ENCODE measurements at regions of chr1 and their contacts with region 1.

Region 1: GRCh38 chr1:239898062-239898730 is 193.5 kb upstream of the FMN2 start:
- DNase-seq: peak; percentile 41 to 76 (median 71)
- ATAC-seq: peak; percentile 96
- H3K4me3 ChIP-seq: no peak overlapping the region
- H3K4me3 Mint-ChIP-seq: peak overlapping the region in 5 of 10 donors; percentile 7 to 58 (median 36)
- H3K27ac ChIP-seq: no peak overlapping the region
- H3K27ac Mint-ChIP-seq: peak overlapping the region in 1 of 9 donors; percentile 10
- H3K4me1 ChIP-seq: no peaks in the 10 kb centered on the region
- H3K4me1 Mint-ChIP-seq: peaks cover 0 to 7% (median 2%) of the 10 kb centered on the region in 7 donors
- H3K27me3 ChIP-seq: no peaks in the 10 kb centered on the region
- H3K27me3 Mint-ChIP-seq: peaks cover 0 to 10% (median 4%) of the 10 kb centered on the region in 5 donors

Region 2: GRCh38 chr1:238239343-238239742 is 1658.9 kb before region 1 on chr1:
- CTCF ChIA-PET with region 1: no interaction called
- POLR2A ChIA-PET with region 1: no interaction called
- intact Hi-C with region 1: loop called in 1 of 2 experiments (anchors 5 kb)
- DNase-seq: no peak
- ATAC-seq: no peak
- H3K4me3 ChIP-seq: no peak overlapping the region
- H3K4me3 Mint-ChIP-seq: no peak overlapping the region
- H3K27ac ChIP-seq: no peak overlapping the region
- H3K27ac Mint-ChIP-seq: no peak overlapping the region
- H3K4me1 ChIP-seq: no peaks in the 10 kb centered on the region
- H3K4me1 Mint-ChIP-seq: no peaks in the 10 kb centered on the region
- H3K27me3 ChIP-seq: no peaks in the 10 kb centered on the region
- H3K27me3 Mint-ChIP-seq: no peaks in the 10 kb centered on the region

Region 3: GRCh38 chr1:239308701-239309333 is 589.4 kb before region 1 on chr1:
- CTCF ChIA-PET with region 1: interaction called, 4 read pairs
- POLR2A ChIA-PET with region 1: no interaction called
- intact Hi-C with region 1: loop called (anchors 1 kb)
- DNase-seq: peak in 5 of 9 donors; percentile 3 to 19 (median 7)
- ATAC-seq: peak; percentile 51
- H3K4me3 ChIP-seq: no peak overlapping the region
- H3K4me3 Mint-ChIP-seq: no peak overlapping the region
- H3K27ac ChIP-seq: no peak overlapping the region
- H3K27ac Mint-ChIP-seq: no peak overlapping the region
- H3K4me1 ChIP-seq: no peaks in the 10 kb centered on the region
- H3K4me1 Mint-ChIP-seq: no peaks in the 10 kb centered on the region
- H3K27me3 ChIP-seq: no peaks in the 10 kb centered on the region
- H3K27me3 Mint-ChIP-seq: peaks cover 0 to 7% (median 0%) of the 10 kb centered on the region in 5 donors

Region 4: GRCh38 chr1:239538239-239538988 is 359.8 kb before region 1 on chr1:
- CTCF ChIA-PET with region 1: no interaction called
- POLR2A ChIA-PET with region 1: no interaction called
- intact Hi-C with region 1: no loop called
- DNase-seq: no peak
- ATAC-seq: no peak
- H3K4me3 ChIP-seq: no peak overlapping the region
- H3K4me3 Mint-ChIP-seq: no peak overlapping the region
- H3K27ac ChIP-seq: no peak overlapping the region
- H3K27ac Mint-ChIP-seq: no peak overlapping the region
- H3K4me1 ChIP-seq: no peaks in the 10 kb centered on the region
- H3K4me1 Mint-ChIP-seq: no peaks in the 10 kb centered on the region
- H3K27me3 ChIP-seq: no peaks in the 10 kb centered on the region
- H3K27me3 Mint-ChIP-seq: no peaks in the 10 kb centered on the region

Region 5: DNA sequence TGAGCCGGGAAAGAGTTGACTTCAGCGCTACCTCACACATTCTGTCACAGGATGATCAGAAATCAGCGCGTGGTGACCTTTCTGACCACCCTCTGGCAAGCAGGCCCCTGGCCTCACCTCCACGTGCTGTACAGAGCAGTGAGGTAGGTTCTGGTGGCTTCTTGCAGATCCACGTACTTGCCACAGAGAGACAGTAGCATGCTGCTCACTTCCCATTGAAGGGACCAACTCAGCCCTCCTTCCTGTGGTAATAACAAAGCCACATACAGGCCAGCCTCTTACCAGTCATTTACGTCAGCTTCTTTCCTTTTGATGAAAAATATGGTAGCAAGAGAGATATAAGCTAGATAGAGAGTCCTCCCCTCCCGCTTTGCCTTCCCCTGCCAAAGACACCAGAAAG is 311.1 kb before region 1 on chr1:
- CTCF ChIA-PET with region 1: interaction called, 5 read pairs
- POLR2A ChIA-PET with region 1: no interaction called
- intact Hi-C with region 1: loop called (anchors 1 kb)
- DNase-seq: peak in 7 of 9 donors; percentile 37 to 65 (median 54)
- ATAC-seq: peak; percentile 95
- H3K4me3 ChIP-seq: no peak overlapping the region
- H3K4me3 Mint-ChIP-seq: peak overlapping the region in 3 of 10 donors; percentile 14 to 26 (median 23)
- H3K27ac ChIP-seq: no peak overlapping the region
- H3K27ac Mint-ChIP-seq: peak overlapping the region in 6 of 9 donors; percentile 3 to 60 (median 40)
- H3K4me1 ChIP-seq: peaks cover 0 to 5% of the 10 kb centered on the region in 2 donors
- H3K4me1 Mint-ChIP-seq: peaks cover 5 to 17% (median 11%) of the 10 kb centered on the region in 7 donors
- H3K27me3 ChIP-seq: no peaks in the 10 kb centered on the region
- H3K27me3 Mint-ChIP-seq: peaks cover 0 to 9% (median 0%) of the 10 kb centered on the region in 5 donors

Region 6: DNA sequence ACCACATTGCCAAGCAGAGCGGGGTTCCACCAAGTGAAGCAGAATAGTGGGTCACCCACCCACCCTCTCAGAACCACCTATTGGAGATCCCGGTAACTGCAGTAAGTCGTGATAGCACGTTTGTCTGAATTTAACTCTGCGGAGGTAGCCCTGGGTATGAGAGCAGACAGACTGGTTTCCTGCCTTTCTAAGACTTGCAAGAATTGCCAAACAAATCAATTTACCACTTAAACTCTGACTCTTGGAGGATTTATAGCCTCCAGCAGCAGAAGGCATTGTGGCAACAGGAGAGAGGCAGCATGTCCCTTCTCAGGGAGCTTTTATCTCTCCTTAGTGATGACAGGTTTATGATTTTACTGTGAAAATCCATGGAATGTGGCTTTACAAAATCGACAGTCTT is 94.4 kb before region 1 on chr1:
- CTCF ChIA-PET with region 1: no interaction called
- POLR2A ChIA-PET with region 1: no interaction called
- intact Hi-C with region 1: loop called in 1 of 2 experiments (anchors 2 kb)
- DNase-seq: no peak
- ATAC-seq: no peak
- H3K4me3 ChIP-seq: no peak overlapping the region
- H3K4me3 Mint-ChIP-seq: no peak overlapping the region
- H3K27ac ChIP-seq: no peak overlapping the region
- H3K27ac Mint-ChIP-seq: peak overlapping the region in 1 of 9 donors; percentile 4
- H3K4me1 ChIP-seq: no peaks in the 10 kb centered on the region
- H3K4me1 Mint-ChIP-seq: peaks cover 2 to 21% (median 11%) of the 10 kb centered on the region in 7 donors
- H3K27me3 ChIP-seq: no peaks in the 10 kb centered on the region
- H3K27me3 Mint-ChIP-seq: no peaks in the 10 kb centered on the region

Region 7: DNA sequence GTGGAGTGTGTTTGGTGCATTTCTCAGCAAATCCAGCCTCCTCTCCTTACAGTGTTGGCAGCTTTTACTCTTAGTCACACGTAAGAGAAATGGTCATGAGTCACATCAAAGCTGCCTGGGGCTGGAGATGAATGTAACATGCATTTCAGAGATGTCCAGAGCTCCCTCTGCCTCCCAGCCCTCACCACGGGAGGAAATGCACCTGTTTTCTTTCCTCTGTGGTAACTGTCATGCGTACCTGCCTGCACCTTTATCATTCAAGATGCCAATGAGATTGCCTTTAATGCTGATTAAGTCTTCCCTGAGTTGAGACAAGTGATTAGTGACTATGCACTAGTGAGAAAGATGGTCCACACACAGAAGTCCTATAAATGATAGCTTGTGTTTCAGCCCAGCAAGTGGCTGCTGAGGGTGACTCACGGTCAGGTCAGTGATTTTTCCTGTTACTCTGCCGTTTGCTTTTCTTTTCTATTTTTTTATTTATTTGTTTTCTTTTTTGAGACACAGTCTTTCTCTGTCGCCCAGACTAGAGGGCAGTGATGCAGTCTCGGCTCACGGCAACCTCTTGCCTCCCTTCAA is 83.8 kb before region 1 on chr1:
- CTCF ChIA-PET with region 1: interaction called, 3 read pairs
- POLR2A ChIA-PET with region 1: no interaction called
- intact Hi-C with region 1: loop called in 1 of 2 experiments (anchors 5 kb)
- DNase-seq: no peak
- ATAC-seq: peak; percentile 30
- H3K4me3 ChIP-seq: no peak overlapping the region
- H3K4me3 Mint-ChIP-seq: no peak overlapping the region
- H3K27ac ChIP-seq: no peak overlapping the region
- H3K27ac Mint-ChIP-seq: peak overlapping the region in 2 of 9 donors; percentile 28 to 31
- H3K4me1 ChIP-seq: peaks cover 4 to 11% of the 10 kb centered on the region in 2 donors
- H3K4me1 Mint-ChIP-seq: peaks cover 18 to 32% (median 22%) of the 10 kb centered on the region in 7 donors
- H3K27me3 ChIP-seq: no peaks in the 10 kb centered on the region
- H3K27me3 Mint-ChIP-seq: no peaks in the 10 kb centered on the region

Measured in naive thymus-derived CD4-positive, alpha-beta T cell (primary cell).